Activated CD8-positive, alpha-beta T cell treated with anti-CD3 and anti-CD28 coated beads, Interleukin-2, amount 10 ng/mL, durations not matched to agents 7 days and 5 days (primary cell): ENCODE measurements at regions of chr16 and their contacts with region 1.

Region 1: DNA sequence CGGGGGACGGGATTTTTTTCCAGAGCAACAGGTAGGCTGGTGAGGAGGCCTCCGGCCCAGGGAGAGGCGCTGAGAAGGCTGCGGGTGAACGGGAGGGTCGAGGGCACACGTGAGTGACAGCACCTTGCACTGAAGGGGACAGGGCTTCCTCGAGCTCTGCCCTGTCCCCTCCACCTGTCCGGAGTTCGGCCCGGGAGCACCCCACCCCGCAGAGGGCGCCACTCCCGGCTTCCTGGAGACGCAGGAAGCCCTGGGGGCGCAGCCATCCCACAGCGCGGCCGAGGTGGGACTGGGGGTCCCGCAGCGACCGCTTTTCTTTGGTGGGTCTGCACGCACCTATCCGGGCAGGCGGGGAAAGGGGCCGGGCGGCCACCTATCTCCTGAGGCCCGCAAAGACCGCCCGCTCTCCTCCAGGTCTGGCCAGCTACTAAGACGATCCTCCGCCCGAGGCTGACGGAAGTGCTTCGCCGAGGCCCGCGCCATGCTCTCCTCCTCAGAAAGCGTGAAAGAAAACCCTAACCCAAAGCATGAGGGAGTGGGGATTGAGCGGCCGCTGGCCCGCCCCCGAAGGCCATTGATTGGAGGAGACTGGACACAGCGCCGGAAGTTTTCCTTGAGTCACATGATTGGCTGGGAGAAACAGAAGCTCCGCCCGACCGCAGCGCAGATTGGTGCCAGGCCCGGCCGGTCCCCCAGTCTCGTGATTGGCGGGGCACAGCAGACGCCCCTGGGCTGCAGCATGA is 34.3 kb downstream of the DDX19A start:
- DNase-seq: peak; percentile 99
- ATAC-seq: peak; percentile 95
- H3K4me3 Mint-ChIP-seq: peak overlapping the region; percentile 95
- H3K27ac Mint-ChIP-seq: peak overlapping the region; percentile 98
- H3K4me1 Mint-ChIP-seq: peaks cover 15% of the 10 kb centered on the region
- H3K27me3 Mint-ChIP-seq: no peaks in the 10 kb centered on the region

Region 2: GRCh38 chr16:70324998-70325747 is 55.9 kb before region 1 on chr16:
- CTCF ChIA-PET with region 1: no interaction called
- POLR2A ChIA-PET with region 1: no interaction called
- DNase-seq: no peak
- ATAC-seq: no peak
- H3K4me3 Mint-ChIP-seq: no peak overlapping the region
- H3K27ac Mint-ChIP-seq: no peak overlapping the region
- H3K4me1 Mint-ChIP-seq: no peaks in the 10 kb centered on the region
- H3K27me3 Mint-ChIP-seq: no peaks in the 10 kb centered on the region

Region 3: GRCh38 chr16:70364399-70364798 is 16.6 kb before region 1 on chr16:
- CTCF ChIA-PET with region 1: interaction called, 10 read pairs
- POLR2A ChIA-PET with region 1: interaction called, 6 read pairs
- DNase-seq: no peak
- ATAC-seq: no peak
- H3K4me3 Mint-ChIP-seq: no peak overlapping the region
- H3K27ac Mint-ChIP-seq: no peak overlapping the region
- H3K4me1 Mint-ChIP-seq: no peaks in the 10 kb centered on the region
- H3K27me3 Mint-ChIP-seq: no peaks in the 10 kb centered on the region

Region 4: GRCh38 chr16:70395345-70395901 is 14.4 kb after region 1 on chr16:
- CTCF ChIA-PET with region 1: interaction called, 13 read pairs
- POLR2A ChIA-PET with region 1: interaction called, 13 read pairs
- DNase-seq: peak; percentile 73
- ATAC-seq: peak; percentile 77
- H3K4me3 Mint-ChIP-seq: no peak overlapping the region
- H3K27ac Mint-ChIP-seq: no peak overlapping the region
- H3K4me1 Mint-ChIP-seq: peaks cover 14% of the 10 kb centered on the region
- H3K27me3 Mint-ChIP-seq: no peaks in the 10 kb centered on the region

Region 5: GRCh38 chr16:70416748-70417616 is 36.0 kb after region 1 on chr16:
- CTCF ChIA-PET with region 1: interaction called, 5 read pairs
- POLR2A ChIA-PET with region 1: interaction called, 11 read pairs
- DNase-seq: no peak
- ATAC-seq: no peak
- H3K4me3 Mint-ChIP-seq: no peak overlapping the region
- H3K27ac Mint-ChIP-seq: no peak overlapping the region
- H3K4me1 Mint-ChIP-seq: peaks cover 44% of the 10 kb centered on the region
- H3K27me3 Mint-ChIP-seq: no peaks in the 10 kb centered on the region

Region 6: DNA sequence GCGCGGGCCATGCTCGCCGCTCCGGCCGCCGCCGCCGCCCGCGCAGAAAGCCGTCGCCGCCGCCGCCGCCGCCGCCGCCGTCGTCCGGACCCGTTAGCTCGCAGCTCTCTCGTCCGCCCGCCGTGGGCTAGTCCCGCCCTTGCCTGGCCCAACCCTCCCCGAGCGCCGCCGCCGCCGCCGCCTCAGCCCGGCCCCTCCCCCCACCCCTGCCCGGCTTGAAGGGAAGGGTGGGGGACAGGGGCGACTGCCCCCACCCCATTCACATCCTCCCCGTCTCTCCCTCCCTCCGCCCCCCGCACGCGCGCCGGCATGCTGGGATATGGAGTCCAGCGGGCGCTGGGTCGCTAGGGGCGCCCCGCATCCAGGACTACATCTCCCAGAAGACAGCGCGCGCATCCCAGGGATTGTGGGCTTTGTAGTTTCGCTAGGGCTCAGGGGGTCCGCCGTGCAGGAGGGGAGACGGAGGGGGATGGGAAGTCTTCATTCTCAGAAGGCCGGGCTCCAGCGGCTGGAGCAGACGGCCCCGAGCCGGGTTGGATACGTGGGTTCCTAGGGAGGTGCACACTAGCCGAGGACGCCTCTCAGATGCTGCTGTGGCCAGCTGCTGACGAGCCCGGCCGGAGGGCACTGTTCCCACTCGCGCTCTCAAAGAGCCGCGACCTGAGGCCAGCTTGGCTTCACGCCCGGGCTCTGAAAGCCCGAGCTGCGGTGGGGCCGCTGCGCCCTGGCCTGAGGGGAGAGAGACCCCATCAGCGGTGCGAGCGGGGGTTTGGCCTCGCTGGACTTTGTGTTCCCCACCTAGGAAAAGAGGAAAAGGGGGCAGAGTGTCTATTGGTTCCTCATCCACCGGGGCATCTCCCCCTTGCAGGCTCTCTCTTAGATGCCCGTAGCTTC is 58.2 kb after region 1 on chr16 and contains the start of gene ST3GAL2:
- CTCF ChIA-PET with region 1: interaction called, 6 read pairs
- POLR2A ChIA-PET with region 1: interaction called, 30 read pairs
- DNase-seq: peak; percentile 96
- ATAC-seq: peak; percentile 93
- H3K4me3 Mint-ChIP-seq: peak within 1 kb of the TSS; percentile 88
- H3K27ac Mint-ChIP-seq: peak within 1 kb of the TSS; percentile 91
- H3K4me1 Mint-ChIP-seq: peaks cover 35% of the 10 kb centered on the region
- H3K27me3 Mint-ChIP-seq: no peaks in the 10 kb centered on the region
- total RNA-seq, gene ST3GAL2: 34.1 to 39.0 TPM

Region 7: GRCh38 chr16:70478912-70479341 is 97.9 kb after region 1 on chr16:
- CTCF ChIA-PET with region 1: interaction called, 5 read pairs
- POLR2A ChIA-PET with region 1: interaction called, 14 read pairs
- DNase-seq: no peak
- ATAC-seq: no peak
- H3K4me3 Mint-ChIP-seq: no peak overlapping the region
- H3K27ac Mint-ChIP-seq: no peak overlapping the region
- H3K4me1 Mint-ChIP-seq: peaks cover 27% of the 10 kb centered on the region
- H3K27me3 Mint-ChIP-seq: no peaks in the 10 kb centered on the region

Region 8: DNA sequence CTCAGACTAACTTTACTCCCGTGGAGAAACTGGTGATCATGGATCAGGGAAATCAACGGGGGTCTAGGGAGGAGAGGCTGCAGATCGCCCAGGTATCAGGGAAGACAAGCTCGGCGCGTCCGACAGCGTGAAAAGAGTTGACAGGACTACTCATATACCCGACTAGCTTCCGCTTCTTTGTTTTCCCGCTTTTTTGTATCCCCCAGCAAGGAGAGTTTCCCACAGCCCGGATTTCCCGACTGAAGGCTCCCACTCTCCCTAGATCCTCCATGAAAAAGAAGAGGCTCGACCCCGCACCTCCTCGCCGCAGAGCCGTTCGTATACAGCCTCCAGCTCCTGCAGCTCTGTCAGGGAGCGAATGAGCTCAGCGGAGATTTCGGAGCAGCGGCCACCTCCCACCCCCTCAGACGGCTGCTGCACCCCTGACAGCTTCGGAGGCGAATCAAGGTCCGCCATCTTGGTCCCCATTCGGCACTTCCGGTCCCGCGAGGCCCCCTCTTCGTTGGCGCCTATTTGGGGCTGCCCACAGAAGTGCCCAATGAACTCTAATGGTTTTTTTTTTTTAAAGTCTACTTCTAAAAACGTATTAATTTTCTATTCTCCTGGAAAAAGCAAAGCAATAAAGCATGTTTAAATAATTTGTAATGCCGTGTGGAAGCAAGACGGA is 142.2 kb after region 1 on chr16 and contains the start of gene COG4:
- CTCF ChIA-PET with region 1: interaction called, 11 read pairs
- POLR2A ChIA-PET with region 1: interaction called, 19 read pairs
- DNase-seq: peak; percentile 95
- ATAC-seq: peak; percentile 76
- H3K4me3 Mint-ChIP-seq: peak within 1 kb of the TSS; percentile 98
- H3K27ac Mint-ChIP-seq: peak within 1 kb of the TSS; percentile 99
- H3K4me1 Mint-ChIP-seq: peaks cover 49% of the 10 kb centered on the region
- H3K27me3 Mint-ChIP-seq: no peaks in the 10 kb centered on the region
- total RNA-seq, gene COG4: 62.1 to 71.3 TPM

Region 9: GRCh38 chr16:70754851-70755600 is 374.0 kb after region 1 on chr16:
- CTCF ChIA-PET with region 1: no interaction called
- POLR2A ChIA-PET with region 1: no interaction called
- DNase-seq: no peak
- ATAC-seq: no peak
- H3K4me3 Mint-ChIP-seq: no peak overlapping the region
- H3K27ac Mint-ChIP-seq: no peak overlapping the region
- H3K4me1 Mint-ChIP-seq: peaks cover 15% of the 10 kb centered on the region
- H3K27me3 Mint-ChIP-seq: no peaks in the 10 kb centered on the region